Dorsolateral prefrontal cortex (tissue), 120 donors: ENCODE measurements at regions of chr14 and their contacts with region 1.

Region 1: GRCh38 chr14:73173092-73173735 is 36.9 kb downstream of the PSEN1 start:
- DNase-seq: no peak
- H3K4me3 ChIP-seq: no peak overlapping the region
- H3K27ac ChIP-seq: peak overlapping the region in 52 of 59 donors; percentile 6 to 99 (median 92)
- H3K27me3 ChIP-seq: no peaks in the 10 kb centered on the region
- CTCF ChIP-seq: peak; percentile 32 to 76 (median 62)

Region 2: DNA sequence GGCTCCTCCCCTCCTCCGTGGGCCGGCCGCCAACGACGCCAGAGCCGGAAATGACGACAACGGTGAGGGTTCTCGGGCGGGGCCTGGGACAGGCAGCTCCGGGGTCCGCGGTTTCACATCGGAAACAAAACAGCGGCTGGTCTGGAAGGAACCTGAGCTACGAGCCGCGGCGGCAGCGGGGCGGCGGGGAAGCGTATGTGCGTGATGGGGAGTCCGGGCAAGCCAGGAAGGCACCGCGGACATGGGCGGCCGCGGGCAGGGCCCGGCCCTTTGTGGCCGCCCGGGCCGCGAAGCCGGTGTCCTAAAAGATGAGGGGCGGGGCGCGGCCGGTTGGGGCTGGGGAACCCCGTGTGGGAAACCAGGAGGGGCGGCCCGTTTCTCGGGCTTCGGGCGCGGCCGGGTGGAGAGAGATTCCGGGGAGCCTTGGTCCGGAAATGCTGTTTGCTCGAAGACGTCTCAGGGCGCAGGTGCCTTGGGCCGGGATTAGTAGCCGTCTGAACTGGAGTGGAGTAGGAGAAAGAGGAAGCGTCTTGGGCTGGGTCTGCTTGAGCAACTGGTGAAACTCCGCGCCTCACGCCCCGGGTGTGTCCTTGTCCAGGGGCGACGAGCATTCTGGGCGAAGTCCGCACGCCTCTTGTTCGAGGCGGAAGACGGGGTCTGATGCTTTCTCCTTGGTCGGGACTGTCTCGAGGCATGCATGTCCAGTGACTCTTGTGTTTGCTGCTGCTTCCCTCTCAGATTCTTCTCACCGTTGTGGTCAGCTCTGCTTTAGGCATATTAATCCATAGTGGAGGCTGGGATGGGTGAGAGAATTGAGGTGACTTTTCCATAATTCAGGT is 36.6 kb before region 1 on chr14 and contains the start of gene PSEN1:
- intact Hi-C with region 1: loop called in 1 of 2 experiments (anchors 2 kb)
- DNase-seq: peak; percentile 95 to 99 (median 98)
- H3K4me3 ChIP-seq: peak within 1 kb of the TSS; percentile 63 to 98 (median 92)
- H3K27ac ChIP-seq: peak within 1 kb of the TSS; percentile 45 to 100 (median 94)
- H3K27me3 ChIP-seq: no peaks in the 10 kb centered on the region
- CTCF ChIP-seq: peak in 13 of 56 donors; percentile 1 to 31 (median 13)
- total RNA-seq, gene PSEN1: 53.3 to 206 (median 92.7) TPM

Region 3: DNA sequence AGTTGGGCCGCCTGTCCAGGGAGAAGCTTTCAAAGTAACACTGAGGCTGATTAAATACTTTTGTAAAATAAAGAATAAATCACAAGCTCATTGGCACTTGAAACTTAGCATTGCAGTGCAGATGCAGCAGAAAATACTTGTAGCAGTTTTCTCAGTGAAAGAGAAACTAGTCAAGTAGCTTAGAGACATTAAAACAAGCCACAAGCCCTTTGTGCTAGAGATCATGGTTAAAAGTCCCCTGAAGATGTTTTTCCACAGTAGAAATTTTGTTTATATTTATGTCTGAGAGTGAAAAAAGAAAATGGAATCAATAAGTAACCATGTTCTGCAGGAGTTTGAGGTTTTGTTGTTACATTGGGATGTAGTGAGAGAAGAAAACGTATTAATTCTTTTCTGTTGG is 31.0 kb before region 1 on chr14:
- intact Hi-C with region 1: loop called (anchors 1 to 2 kb)
- DNase-seq: no peak
- H3K4me3 ChIP-seq: peak overlapping the region in 39 of 59 donors; percentile 3 to 49 (median 23)
- H3K27ac ChIP-seq: peak overlapping the region; percentile 6 to 100 (median 97)
- H3K27me3 ChIP-seq: no peaks in the 10 kb centered on the region
- CTCF ChIP-seq: no peak

Region 4: GRCh38 chr14:73223049-73223448 is 49.8 kb after region 1 on chr14:
- intact Hi-C with region 1: loop called in 1 of 2 experiments (anchors 5 kb)
- DNase-seq: no peak
- H3K4me3 ChIP-seq: no peak overlapping the region
- H3K27ac ChIP-seq: peak overlapping the region in 23 of 59 donors; percentile 1 to 58 (median 25)
- H3K27me3 ChIP-seq: no peaks in the 10 kb centered on the region
- CTCF ChIP-seq: peak in 16 of 56 donors; percentile 6 to 49 (median 20)

Region 5: DNA sequence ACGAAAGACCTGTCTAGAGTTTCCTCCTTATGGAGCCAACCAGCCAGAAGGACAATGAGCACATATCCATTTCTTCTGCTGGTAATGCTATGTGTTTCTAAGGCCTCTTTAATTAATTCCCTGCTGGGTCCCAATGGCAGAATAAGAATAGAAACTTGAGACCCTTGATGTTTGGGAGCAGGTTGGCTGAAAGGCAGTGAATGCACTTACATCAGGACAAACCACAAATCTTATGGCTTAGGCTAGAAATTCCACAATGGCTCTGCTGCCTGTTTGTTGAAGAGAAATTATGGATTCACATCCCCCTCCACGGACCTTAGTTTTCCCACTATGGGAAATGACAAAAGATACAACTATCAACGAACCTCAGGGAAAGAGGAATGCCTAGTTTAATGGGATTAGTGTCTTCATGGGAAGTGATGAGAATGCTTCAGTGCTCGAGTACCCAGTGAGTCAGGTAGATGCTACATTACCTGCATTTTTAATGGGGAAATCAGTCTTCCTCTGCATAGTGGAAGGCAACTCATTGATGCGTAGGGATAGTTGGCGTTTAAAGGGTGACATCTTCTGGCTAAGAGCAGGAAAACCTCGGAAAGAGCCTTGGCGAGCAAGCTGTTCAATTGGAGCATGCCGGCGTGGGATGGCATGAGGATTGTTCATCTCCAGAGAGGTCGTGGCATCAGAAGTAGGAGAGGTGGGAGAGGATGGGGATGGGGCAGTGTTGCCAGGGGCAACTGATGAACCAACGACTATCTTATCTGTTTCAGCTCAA is 110.6 kb after region 1 on chr14:
- intact Hi-C with region 1: loop called (anchors 5 to 10 kb)
- DNase-seq: peak in 4 of 10 donors; percentile 40 to 53 (median 46)
- H3K4me3 ChIP-seq: no peak overlapping the region
- H3K27ac ChIP-seq: peak overlapping the region in 2 of 59 donors; percentile 4 to 7
- H3K27me3 ChIP-seq: no peaks in the 10 kb centered on the region
- CTCF ChIP-seq: peak in 50 of 56 donors; percentile 23 to 74 (median 51)

Region 6: DNA sequence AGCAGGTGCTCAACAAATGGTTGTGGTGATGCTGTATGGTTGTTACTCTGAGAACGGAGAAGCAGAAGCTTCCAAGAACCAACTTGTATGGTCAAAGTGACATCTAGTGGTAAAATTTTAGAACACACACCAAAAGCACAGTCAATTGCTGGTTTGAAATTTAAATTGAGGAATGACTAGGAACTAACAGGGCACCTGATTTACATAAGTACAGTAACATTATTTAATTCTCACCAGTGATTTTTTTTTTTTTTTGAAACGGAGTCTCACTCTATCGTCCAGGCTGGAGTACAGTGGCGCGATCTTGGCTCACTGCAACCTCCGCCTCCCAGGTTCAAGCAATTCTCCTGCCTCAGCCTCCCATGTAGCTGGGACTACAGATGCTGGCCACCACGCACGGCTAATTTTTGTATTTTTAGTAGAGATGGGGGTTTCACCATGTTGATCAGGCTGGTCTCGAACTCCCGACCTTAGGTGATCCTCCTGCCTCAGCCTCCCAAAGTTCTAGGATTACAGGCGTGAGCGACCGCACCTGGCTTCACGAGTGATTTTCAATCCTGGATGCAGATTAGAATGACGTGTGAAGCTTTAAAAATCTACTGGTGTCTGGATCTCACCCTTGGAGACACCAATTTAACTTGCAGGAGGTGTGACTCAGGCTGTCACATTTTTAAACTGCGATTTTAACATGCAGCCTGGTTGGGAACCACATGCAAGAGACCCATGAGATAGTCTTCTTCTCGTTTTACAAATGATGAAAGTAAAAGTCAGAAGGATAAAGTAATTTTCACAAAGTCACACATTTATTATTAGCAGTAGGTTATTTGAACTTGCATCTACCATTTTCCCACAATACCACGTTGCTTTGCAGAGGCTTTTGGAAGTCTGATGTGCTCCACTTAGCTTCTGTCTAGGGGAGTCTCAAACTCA is 299.2 kb after region 1 on chr14:
- intact Hi-C with region 1: loop called in 1 of 2 experiments (anchors 5 kb)
- DNase-seq: no peak
- H3K4me3 ChIP-seq: peak overlapping the region in 1 of 59 donors; percentile 13
- H3K27ac ChIP-seq: peak overlapping the region in 10 of 59 donors; percentile 2 to 59 (median 29)
- H3K27me3 ChIP-seq: no peaks in the 10 kb centered on the region
- CTCF ChIP-seq: peak; percentile 65 to 89 (median 78)